B cell (primary cell): ENCODE measurements at regions of chr17 and their contacts with region 1.

Region 1: GRCh38 chr17:49230636-49231562 is at the start of gene PHOSPHO1:
- DNase-seq: peak; percentile 93
- ATAC-seq: peak; percentile 93
- H3K4me3 ChIP-seq: peak within 1 kb of the TSS; percentile 62 to 93 (median 63)
- H3K4me3 Mint-ChIP-seq: peak within 1 kb of the TSS; percentile 93
- H3K27ac ChIP-seq: no peak within 1 kb of the TSS
- H3K27ac Mint-ChIP-seq: peak within 1 kb of the TSS; percentile 78
- H3K4me1 ChIP-seq: peaks cover 25 to 32% of the 10 kb centered on the region in 2 donors
- H3K4me1 Mint-ChIP-seq: peaks cover 21% of the 10 kb centered on the region
- H3K27me3 ChIP-seq: peaks cover 0 to 18% (median 8%) of the 10 kb centered on the region in 4 experiments
- H3K27me3 Mint-ChIP-seq: peaks cover 19% of the 10 kb centered on the region
- CTCF ChIP-seq: no peak
- total RNA-seq, gene PHOSPHO1: 0.15 TPM in 1 of 2 replicates, not detected in the other

Region 2: DNA sequence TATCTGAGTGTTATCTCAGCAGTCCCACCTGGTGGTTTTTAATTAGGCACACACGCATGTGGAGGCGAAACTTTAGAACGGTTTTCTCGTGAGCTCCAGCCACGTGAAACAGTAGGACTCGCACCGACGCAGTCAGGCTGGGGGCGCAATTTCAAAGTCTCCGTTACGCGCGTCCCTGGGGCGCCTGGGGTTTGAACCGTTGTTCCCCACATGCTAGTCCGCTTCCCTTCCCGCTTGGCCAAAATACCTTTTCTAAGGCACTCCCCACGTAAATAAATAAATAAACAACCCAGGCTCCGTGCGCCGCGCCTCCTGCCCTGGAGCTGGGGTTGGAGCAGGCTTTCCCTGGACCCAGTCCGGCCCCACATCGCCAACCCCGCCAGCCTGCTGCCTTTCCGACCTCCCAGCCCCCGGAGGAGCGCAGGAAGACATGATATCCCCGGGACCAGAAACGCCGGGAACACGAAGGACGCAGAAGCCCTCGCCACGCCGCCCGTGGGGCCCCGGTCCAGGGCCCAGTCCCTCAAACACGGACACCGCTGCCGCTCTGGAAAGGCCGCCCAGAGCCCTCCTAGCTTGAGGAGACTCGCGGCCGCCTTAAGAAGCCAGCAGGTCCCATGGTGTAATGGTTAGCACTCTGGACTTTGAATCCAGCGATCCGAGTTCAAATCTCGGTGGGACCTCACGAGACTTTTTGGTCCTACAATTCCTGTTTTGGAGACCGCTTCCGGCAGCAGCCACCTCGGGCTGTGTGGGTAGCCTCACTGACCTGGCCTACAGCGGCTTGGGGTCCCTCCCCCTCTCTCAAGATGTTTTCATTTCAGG is 38.8 kb before region 1 on chr17:
- CTCF ChIA-PET with region 1: interaction called, 332 read pairs
- POLR2A ChIA-PET with region 1: interaction called, 11 read pairs
- intact Hi-C with region 1: loop called (anchors 1 kb)
- DNase-seq: peak; percentile 93
- ATAC-seq: peak; percentile 42
- H3K4me3 ChIP-seq: peak overlapping the region; percentile 76 to 95 (median 88)
- H3K4me3 Mint-ChIP-seq: peak overlapping the region; percentile 93
- H3K27ac ChIP-seq: peak overlapping the region; percentile 92 to 95
- H3K27ac Mint-ChIP-seq: peak overlapping the region; percentile 97
- H3K4me1 ChIP-seq: peaks cover 11 to 23% of the 10 kb centered on the region in 2 donors
- H3K4me1 Mint-ChIP-seq: peaks cover 32% of the 10 kb centered on the region
- H3K27me3 ChIP-seq: no peaks in the 10 kb centered on the region
- H3K27me3 Mint-ChIP-seq: no peaks in the 10 kb centered on the region
- CTCF ChIP-seq: peak; percentile 66

Region 3: GRCh38 chr17:49210158-49211029 is 20.5 kb before region 1 on chr17 and contains the starts of genes ABI3 and GNGT2:
- CTCF ChIA-PET with region 1: interaction called, 140 read pairs
- POLR2A ChIA-PET with region 1: no interaction called
- intact Hi-C with region 1: loop called (anchors 1 kb)
- DNase-seq: peak; percentile 86
- ATAC-seq: peak; percentile 92
- H3K4me3 ChIP-seq: peak within 1 kb of the TSS; percentile 31 to 68 (median 60)
- H3K4me3 Mint-ChIP-seq: peak within 1 kb of the TSS; percentile 85
- H3K27ac ChIP-seq: peak within 1 kb of the TSS; percentile 51 to 82
- H3K27ac Mint-ChIP-seq: peak within 1 kb of the TSS; percentile 89
- H3K4me1 ChIP-seq: peaks cover 61 to 71% of the 10 kb centered on the region in 2 donors
- H3K4me1 Mint-ChIP-seq: peaks cover 61% of the 10 kb centered on the region
- H3K27me3 ChIP-seq: no peaks in the 10 kb centered on the region
- H3K27me3 Mint-ChIP-seq: no peaks in the 10 kb centered on the region
- CTCF ChIP-seq: no peak
- total RNA-seq, gene ABI3: 20.7 and 23.3 TPM in 2 replicates
- total RNA-seq, gene GNGT2: 9.3 and 11.1 TPM in 2 replicates

Region 4: GRCh38 chr17:49260011-49260921 is 29.4 kb after region 1 on chr17:
- CTCF ChIA-PET with region 1: interaction called, 7 read pairs
- POLR2A ChIA-PET with region 1: no interaction called
- intact Hi-C with region 1: loop called (anchors 5 kb)
- DNase-seq: peak; percentile 72
- ATAC-seq: peak; percentile 80
- H3K4me3 ChIP-seq: peak overlapping the region; percentile 26 to 68 (median 52)
- H3K4me3 Mint-ChIP-seq: peak overlapping the region; percentile 86
- H3K27ac ChIP-seq: peak overlapping the region in 1 of 2 donors; percentile 12
- H3K27ac Mint-ChIP-seq: no peak overlapping the region
- H3K4me1 ChIP-seq: peaks cover 13 to 14% of the 10 kb centered on the region in 2 donors
- H3K4me1 Mint-ChIP-seq: peaks cover 12% of the 10 kb centered on the region
- H3K27me3 ChIP-seq: peaks cover 0 to 26% (median 4%) of the 10 kb centered on the region in 4 experiments
- H3K27me3 Mint-ChIP-seq: peaks cover 22% of the 10 kb centered on the region
- CTCF ChIP-seq: no peak

Region 5: DNA sequence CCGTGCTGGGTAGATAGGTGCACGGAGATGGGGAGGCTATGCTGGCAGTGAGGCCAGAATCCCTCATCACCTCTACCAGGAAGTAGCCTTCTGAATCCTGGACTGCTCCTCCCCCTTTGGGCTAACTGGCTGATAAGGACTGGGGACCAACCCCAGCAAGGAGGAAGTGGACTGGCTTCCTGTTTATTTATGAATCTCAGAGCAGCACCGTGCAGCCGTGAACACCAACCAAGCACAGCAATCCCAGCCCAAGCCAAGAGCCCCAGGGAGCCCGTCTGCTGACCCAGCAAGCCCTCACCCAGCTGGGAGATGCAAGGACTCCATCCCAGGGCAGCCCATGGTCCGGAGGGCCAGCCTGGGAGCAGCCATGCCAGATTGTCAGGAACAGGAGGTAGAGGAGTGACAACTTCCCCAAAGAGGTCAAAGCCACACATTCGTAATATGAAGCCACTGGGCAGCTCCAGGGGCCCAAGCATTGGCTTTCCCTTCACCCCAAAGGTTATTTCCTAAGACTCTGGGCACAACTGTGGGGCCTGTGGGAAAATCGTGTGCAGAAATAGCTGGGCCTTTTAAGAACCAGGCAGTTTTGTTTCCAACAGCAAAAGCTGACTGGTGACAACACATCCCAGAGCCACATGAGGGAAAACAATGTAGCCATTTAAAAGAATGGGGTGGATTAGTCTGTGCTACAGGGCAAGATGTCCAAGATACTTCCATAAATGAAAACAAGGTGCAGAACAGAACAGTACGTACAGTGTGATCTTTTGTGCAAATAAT is 159.8 kb after region 1 on chr17:
- CTCF ChIA-PET with region 1: interaction called, 3 read pairs
- POLR2A ChIA-PET with region 1: no interaction called
- intact Hi-C with region 1: loop called (anchors 5 kb)
- DNase-seq: peak; percentile 68
- ATAC-seq: peak; percentile 46
- H3K4me3 ChIP-seq: peak overlapping the region in 2 of 5 experiments; percentile 8 to 49
- H3K4me3 Mint-ChIP-seq: peak overlapping the region; percentile 89
- H3K27ac ChIP-seq: peak overlapping the region; percentile 84 to 92
- H3K27ac Mint-ChIP-seq: peak overlapping the region; percentile 99
- H3K4me1 ChIP-seq: peaks cover 69 to 78% of the 10 kb centered on the region in 2 donors
- H3K4me1 Mint-ChIP-seq: peaks cover 65% of the 10 kb centered on the region
- H3K27me3 ChIP-seq: no peaks in the 10 kb centered on the region
- H3K27me3 Mint-ChIP-seq: no peaks in the 10 kb centered on the region
- CTCF ChIP-seq: no peak